ENCODE measurements at regions of chr13 and their contacts with region 1.

Region 1: GRCh38 chr13:22925881-22926747 is 254.7 kb upstream of the SGCG start:
- DNase-seq: peak; percentile 94
- H3K4me3 ChIP-seq: peak overlapping the region; percentile 53 to 68 (median 67)
- H3K27ac ChIP-seq: peak overlapping the region; percentile 59 to 89 (median 86)
- H3K4me1 ChIP-seq: peaks cover 0 to 19% (median 14%) of the 10 kb centered on the region in 4 donors
- H3K27me3 ChIP-seq: no peaks in the 10 kb centered on the region
- CTCF ChIP-seq: no peak
- EP300 ChIP-seq: no peak
- POLR2A ChIP-seq: peak in 1 of 2 donors; percentile 21

Region 2: GRCh38 chr13:21603531-21604448 is 1322.3 kb before region 1 on chr13 and contains the start of gene MICU2:
- intact Hi-C with region 1: loop called (anchors 10 kb)
- DNase-seq: peak; percentile 96
- H3K4me3 ChIP-seq: peak within 1 kb of the TSS; percentile 83 to 90 (median 89)
- H3K27ac ChIP-seq: peak within 1 kb of the TSS; percentile 97 to 99 (median 98)
- H3K4me1 ChIP-seq: peaks cover 0 to 9% (median 7%) of the 10 kb centered on the region in 4 donors
- H3K27me3 ChIP-seq: no peaks in the 10 kb centered on the region
- CTCF ChIP-seq: peak in 1 of 4 experiments; percentile 30
- EP300 ChIP-seq: no peak
- POLR2A ChIP-seq: peak; percentile 57 to 84
- total RNA-seq, gene MICU2: 23.1 to 51.0 (median 37.5) TPM

Region 3: DNA sequence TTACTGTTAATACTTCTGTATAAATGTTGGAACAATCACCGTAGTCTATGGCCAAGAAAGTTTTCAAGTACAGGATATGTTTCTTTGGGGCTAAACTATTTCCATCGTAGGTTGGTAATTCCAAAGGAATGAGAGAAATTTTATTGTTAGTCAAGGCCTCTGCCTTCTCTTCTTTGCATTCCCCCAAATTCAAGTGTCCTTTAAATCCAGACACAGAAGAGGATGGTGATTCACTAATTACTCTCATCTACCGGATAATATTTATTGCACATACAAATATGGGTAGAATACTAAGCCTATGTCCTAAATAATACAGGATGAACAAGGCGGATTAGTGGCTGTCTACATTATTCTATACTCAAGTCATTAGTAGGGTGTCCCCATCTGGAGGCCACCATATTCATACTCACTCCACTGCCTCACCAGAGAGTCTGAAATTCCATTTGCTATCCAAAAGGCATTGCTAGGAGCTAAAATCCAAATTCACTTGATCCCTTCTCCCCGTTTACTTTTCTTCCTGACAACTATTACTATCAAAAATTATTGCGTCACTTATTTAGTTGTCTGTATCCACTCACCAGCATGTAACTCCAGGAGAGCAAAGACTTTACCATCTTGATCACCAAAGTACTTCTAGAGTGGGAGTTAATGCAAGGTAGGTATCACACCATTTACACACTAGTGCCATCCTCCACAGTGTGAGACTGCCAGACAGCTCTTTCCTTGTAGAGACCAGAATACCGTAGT is 172.2 kb after region 1 on chr13:
- intact Hi-C with region 1: no loop called
- DNase-seq: no peak
- H3K4me3 ChIP-seq: no peak overlapping the region
- H3K27ac ChIP-seq: no peak overlapping the region
- H3K4me1 ChIP-seq: no peaks in the 10 kb centered on the region
- H3K27me3 ChIP-seq: no peaks in the 10 kb centered on the region
- CTCF ChIP-seq: no peak
- EP300 ChIP-seq: no peak
- POLR2A ChIP-seq: no peak

Measured in sigmoid colon (tissue), 7 donors.